Esophagus muscularis mucosa (tissue), 4 donors: ENCODE measurements at regions of chr5 and their contacts with region 1.

Region 1: DNA sequence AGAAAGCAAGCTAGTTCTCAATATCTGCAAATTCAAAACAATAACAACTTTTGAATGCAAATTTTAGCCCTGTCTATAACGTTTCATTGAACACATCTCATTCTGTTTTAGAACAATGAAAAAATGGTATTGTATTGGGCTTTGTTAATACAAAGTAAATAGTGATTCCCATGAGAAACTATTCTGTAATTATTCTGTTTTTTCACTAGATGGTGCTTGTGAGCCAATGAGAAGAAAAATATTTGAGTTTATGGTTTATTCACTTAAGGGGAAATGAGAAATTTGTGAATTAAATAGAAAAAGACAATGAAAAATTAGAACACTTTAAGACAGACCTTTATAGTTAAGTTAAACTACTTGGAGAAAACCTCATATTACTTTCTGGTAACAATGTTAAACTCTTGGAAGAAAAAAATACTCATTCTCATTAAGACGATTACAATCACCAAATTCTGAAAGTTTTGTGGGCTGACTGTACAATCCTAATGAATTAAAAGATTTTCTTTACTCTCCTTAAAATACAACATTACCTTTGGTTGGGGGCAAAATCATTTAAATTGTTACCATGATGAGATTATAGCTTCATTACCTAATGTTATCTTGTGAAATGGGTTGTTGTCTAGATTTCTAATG is 127.0 kb downstream of the NNT start:
- DNase-seq: no peak
- H3K4me3 ChIP-seq: no peak overlapping the region
- H3K27ac ChIP-seq: no peak overlapping the region
- H3K4me1 ChIP-seq: peaks cover 0 to 7% (median 0%) of the 10 kb centered on the region in 4 donors
- H3K27me3 ChIP-seq: no peaks in the 10 kb centered on the region
- CTCF ChIP-seq: peak; percentile 33 to 67 (median 52)
- EP300 ChIP-seq: no peak
- POLR2A ChIP-seq: no peak

Region 2: DNA sequence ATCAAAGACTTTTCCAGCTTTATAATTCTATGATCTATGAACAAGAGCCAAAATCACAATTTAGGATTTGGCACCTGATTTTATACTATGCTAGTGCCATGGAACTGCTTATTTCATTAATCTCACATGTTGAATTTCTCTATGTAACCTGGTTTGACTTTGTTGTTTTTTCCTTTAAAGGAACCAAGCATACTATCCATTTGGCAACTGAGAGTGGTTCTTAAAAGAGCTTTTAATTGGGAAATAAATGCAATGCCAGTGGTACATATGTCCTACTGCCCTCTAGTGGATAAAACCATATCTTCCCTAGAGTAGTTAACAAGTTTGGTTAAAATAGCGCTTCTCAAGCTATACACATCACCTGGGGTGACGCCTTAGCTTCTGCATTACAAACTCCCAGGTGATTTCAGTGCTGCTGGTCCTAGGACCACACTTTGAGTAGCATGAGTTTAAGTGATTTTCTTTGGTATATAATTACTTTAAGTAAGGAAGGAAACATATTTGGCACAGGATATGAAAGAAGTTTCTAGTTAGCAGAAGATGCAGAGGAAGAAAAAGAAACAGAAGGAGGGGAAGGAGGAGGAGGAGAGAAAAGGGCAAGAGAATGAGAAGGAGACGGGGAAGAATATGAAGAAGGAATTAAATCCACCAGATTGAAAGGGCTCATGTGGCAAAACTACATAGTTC is 602.5 kb after region 1 on chr5:
- intact Hi-C with region 1: loop called (anchors 5 kb)
- DNase-seq: no peak
- H3K4me3 ChIP-seq: no peak overlapping the region
- H3K27ac ChIP-seq: peak overlapping the region in 2 of 4 donors; percentile 40 to 45
- H3K4me1 ChIP-seq: peaks cover 0 to 6% (median 2%) of the 10 kb centered on the region in 4 donors
- H3K27me3 ChIP-seq: no peaks in the 10 kb centered on the region
- CTCF ChIP-seq: peak in 2 of 3 experiments; percentile 38 to 55
- EP300 ChIP-seq: no peak
- POLR2A ChIP-seq: no peak